Mammary epithelial cell (primary cell): ENCODE measurements at regions of chr3 and their contacts with region 1.

Region 1: GRCh38 chr3:197083486-197083885 is 53.9 kb upstream of the MELTF start:
- DNase-seq: peak; percentile 69
- H3K4me3 ChIP-seq: no peak overlapping the region
- H3K27ac ChIP-seq: no peak overlapping the region
- H3K4me1 ChIP-seq: peaks cover 6% of the 10 kb centered on the region
- H3K27me3 ChIP-seq: no peaks in the 10 kb centered on the region
- CTCF ChIP-seq: no peak

Region 2: DNA sequence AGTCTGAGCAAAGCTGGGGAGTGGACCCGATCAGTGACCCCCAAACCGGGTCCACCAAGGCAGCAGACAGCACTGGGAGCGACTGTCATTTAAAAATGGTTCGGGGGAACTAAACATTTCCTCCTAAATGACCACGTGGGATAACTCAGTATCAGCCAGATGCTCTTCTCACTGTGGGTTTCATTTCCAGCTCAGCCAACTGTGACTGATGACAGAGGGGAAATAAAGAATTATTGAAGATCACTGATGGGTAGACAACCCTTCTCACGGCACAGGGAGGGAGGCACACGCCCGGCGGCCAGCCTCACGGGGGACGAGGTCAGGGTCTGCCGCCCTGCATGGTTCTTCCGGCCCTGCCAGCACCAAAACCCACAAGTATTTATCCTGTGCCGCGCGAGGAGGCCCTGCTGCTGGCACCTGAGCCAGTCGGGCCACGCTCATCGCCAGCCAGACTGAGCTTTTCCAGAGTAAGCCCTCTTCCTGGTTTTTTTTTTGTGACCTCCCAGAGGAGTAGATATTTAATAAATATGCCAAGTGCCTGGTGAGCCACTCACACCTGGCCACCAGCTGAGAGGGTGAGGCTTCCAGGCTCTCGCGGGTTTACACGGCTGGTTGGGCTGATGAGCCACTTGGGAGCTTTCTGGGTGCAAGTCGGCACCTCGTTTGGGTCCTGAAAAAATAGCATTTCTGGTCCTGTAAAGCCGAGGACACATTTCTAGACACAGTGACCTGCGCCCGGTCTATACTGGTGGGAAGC is 60.1 kb before region 1 on chr3:
- CTCF ChIA-PET with region 1: no interaction called
- dilution Hi-C with region 1: no loop called
- in situ Hi-C with region 1: no loop called
- intact Hi-C with region 1: no loop called
- DNase-seq: no peak
- H3K4me3 ChIP-seq: no peak overlapping the region
- H3K27ac ChIP-seq: no peak overlapping the region
- H3K4me1 ChIP-seq: peaks cover 5% of the 10 kb centered on the region
- H3K27me3 ChIP-seq: no peaks in the 10 kb centered on the region
- CTCF ChIP-seq: no peak

Region 3: GRCh38 chr3:197139586-197139985 is 56.1 kb after region 1 on chr3:
- CTCF ChIA-PET with region 1: interaction called, 10 read pairs
- dilution Hi-C with region 1: no loop called
- in situ Hi-C with region 1: no loop called
- intact Hi-C with region 1: no loop called
- DNase-seq: no peak
- H3K4me3 ChIP-seq: no peak overlapping the region
- H3K27ac ChIP-seq: no peak overlapping the region
- H3K4me1 ChIP-seq: no peaks in the 10 kb centered on the region
- H3K27me3 ChIP-seq: no peaks in the 10 kb centered on the region
- CTCF ChIP-seq: no peak